Heart left ventricle (tissue), 16 donors: ENCODE measurements at regions of chr17 and their contacts with region 1.

Region 1: GRCh38 chr17:73969956-73970355 is 233.5 kb upstream of the RPL38 start:
- DNase-seq: peak in 4 of 5 donors; percentile 28 to 59 (median 36)
- ATAC-seq: peak; percentile 9 to 43 (median 24)
- H3K4me3 ChIP-seq: no peak overlapping the region
- H3K27ac ChIP-seq: no peak overlapping the region
- H3K4me1 ChIP-seq: peaks cover 0 to 9% (median 0%) of the 10 kb centered on the region in 12 donors
- H3K27me3 ChIP-seq: peaks cover 0 to 43% (median 4%) of the 10 kb centered on the region in 9 donors
- CTCF ChIP-seq: no peak
- POLR2A ChIP-seq: no peak

Region 2: GRCh38 chr17:73888862-73889261 is 81.1 kb before region 1 on chr17:
- intact Hi-C with region 1: loop called in 1 of 10 experiments (anchors 10 kb)
- DNase-seq: peak in 3 of 5 donors; percentile 16 to 35 (median 26)
- ATAC-seq: peak in 2 of 4 donors; percentile 13 to 51
- H3K4me3 ChIP-seq: no peak overlapping the region
- H3K27ac ChIP-seq: no peak overlapping the region
- H3K4me1 ChIP-seq: no peaks in the 10 kb centered on the region
- H3K27me3 ChIP-seq: peaks cover 0 to 10% (median 0%) of the 10 kb centered on the region in 9 donors
- CTCF ChIP-seq: no peak
- POLR2A ChIP-seq: no peak